ENCODE measurements at regions of chr1 and their contacts with region 1.

Region 1: GRCh38 chr1:222009105-222009730 is 267.3 kb upstream of the DUSP10 start:
- DNase-seq: peak; percentile 78
- ATAC-seq: peak; percentile 88
- H3K4me3 ChIP-seq: no peak overlapping the region
- H3K27ac ChIP-seq: no peak overlapping the region
- H3K4me1 ChIP-seq: peaks cover 12% of the 10 kb centered on the region; the same call in 1 of the 2 replicates
- H3K27me3 ChIP-seq: no peaks in the 10 kb centered on the region
- CTCF ChIP-seq: peak; percentile 94

Region 2: DNA sequence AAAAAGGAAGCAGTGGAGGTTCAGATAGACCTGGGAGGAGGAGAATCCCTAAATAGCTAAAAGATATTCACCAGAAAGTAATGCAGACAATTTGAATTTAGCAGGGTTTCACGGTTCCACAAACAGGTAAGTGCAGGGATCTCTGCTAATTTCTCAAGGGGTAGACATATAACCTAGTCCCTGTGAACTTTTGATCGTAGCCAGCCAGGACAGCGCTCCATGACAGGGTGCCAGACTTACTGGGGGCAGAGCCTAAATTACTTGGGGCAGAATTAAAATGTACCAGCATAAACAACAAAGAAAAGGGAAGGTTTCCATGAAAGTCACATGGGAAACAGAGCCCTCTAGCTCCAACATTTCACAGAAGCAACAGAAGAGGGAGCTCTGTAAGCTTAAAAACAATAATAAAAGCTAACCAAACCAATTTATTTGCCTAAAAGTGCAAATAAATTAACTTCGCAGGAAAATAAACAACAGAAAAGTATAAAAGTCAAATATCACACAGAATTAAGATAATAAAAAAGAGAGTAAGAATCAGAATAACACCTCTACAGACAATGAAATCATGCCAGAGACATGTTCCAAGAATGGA is 465.6 kb before region 1 on chr1:
- CTCF ChIA-PET with region 1: interaction called, 8 read pairs
- POLR2A ChIA-PET with region 1: no interaction called
- intact Hi-C with region 1: loop called (anchors 2 kb)
- DNase-seq: peak; percentile 60
- ATAC-seq: peak; percentile 48; the same call in 1 of the 2 replicates
- H3K4me3 ChIP-seq: no peak overlapping the region
- H3K27ac ChIP-seq: no peak overlapping the region
- H3K4me1 ChIP-seq: peaks cover 5% of the 10 kb centered on the region; the same call in 1 of the 2 replicates
- H3K27me3 ChIP-seq: no peaks in the 10 kb centered on the region
- CTCF ChIP-seq: peak; percentile 87

Region 3: GRCh38 chr1:221839796-221840395 is 169.3 kb before region 1 on chr1:
- CTCF ChIA-PET with region 1: interaction called, 3 read pairs
- POLR2A ChIA-PET with region 1: no interaction called
- intact Hi-C with region 1: loop called (anchors 5 kb)
- DNase-seq: peak; percentile 97
- ATAC-seq: peak; percentile 97
- H3K4me3 ChIP-seq: no peak overlapping the region
- H3K27ac ChIP-seq: peak overlapping the region; percentile 80
- H3K4me1 ChIP-seq: peaks cover 21% of the 10 kb centered on the region
- H3K27me3 ChIP-seq: no peaks in the 10 kb centered on the region
- CTCF ChIP-seq: no peak

Region 4: GRCh38 chr1:221939607-221940006 is 69.6 kb before region 1 on chr1:
- CTCF ChIA-PET with region 1: no interaction called
- POLR2A ChIA-PET with region 1: no interaction called
- intact Hi-C with region 1: no loop called
- DNase-seq: no peak
- ATAC-seq: no peak
- H3K4me3 ChIP-seq: no peak overlapping the region
- H3K27ac ChIP-seq: no peak overlapping the region
- H3K4me1 ChIP-seq: no peaks in the 10 kb centered on the region
- H3K27me3 ChIP-seq: no peaks in the 10 kb centered on the region
- CTCF ChIP-seq: no peak

Region 5: DNA sequence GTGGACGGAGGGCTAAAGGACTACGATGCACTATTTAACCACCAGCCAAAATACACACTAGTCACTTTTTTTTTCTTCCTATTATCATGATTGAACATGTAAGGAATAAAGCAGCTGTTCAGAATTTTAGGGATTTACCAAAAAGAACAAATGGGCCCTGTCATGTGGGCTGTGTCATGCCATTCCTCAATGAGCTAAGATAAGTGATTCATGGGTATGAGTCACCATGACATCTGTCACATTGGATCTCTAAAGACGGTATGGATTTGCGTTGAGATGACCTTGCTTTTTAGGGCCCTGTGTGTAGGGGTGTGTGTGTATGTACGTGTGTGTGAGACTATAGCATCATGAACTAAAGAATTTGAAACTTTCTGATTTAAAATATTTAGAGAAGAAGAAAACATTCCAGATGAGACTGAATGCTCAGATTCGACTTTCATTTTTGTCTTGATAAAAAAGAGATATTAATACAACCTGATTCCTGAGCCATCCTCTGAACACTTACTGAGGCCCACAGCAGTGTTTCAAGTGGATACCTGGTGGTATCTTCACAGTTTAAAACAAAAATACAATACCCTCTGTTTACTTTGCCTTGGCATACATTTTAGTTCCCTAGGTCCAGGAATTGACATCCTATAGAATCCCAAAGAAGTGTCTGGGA is 21.2 kb before region 1 on chr1:
- CTCF ChIA-PET with region 1: interaction called, 12 read pairs
- POLR2A ChIA-PET with region 1: no interaction called
- intact Hi-C with region 1: no loop called
- DNase-seq: peak; percentile 95
- ATAC-seq: peak; percentile 67
- H3K4me3 ChIP-seq: no peak overlapping the region
- H3K27ac ChIP-seq: peak overlapping the region; percentile 32
- H3K4me1 ChIP-seq: peaks cover 36% of the 10 kb centered on the region
- H3K27me3 ChIP-seq: no peaks in the 10 kb centered on the region
- CTCF ChIP-seq: no peak

Region 6: GRCh38 chr1:222370081-222370912 is 361.1 kb after region 1 on chr1:
- CTCF ChIA-PET with region 1: no interaction called
- POLR2A ChIA-PET with region 1: no interaction called
- intact Hi-C with region 1: no loop called
- DNase-seq: peak; percentile 53
- ATAC-seq: peak; percentile 71
- H3K4me3 ChIP-seq: no peak overlapping the region
- H3K27ac ChIP-seq: no peak overlapping the region
- H3K4me1 ChIP-seq: no peaks in the 10 kb centered on the region
- H3K27me3 ChIP-seq: peaks cover 60% of the 10 kb centered on the region
- CTCF ChIP-seq: no peak